ENCODE measurements at regions of chr2 and their contacts with region 1.

Region 1: GRCh38 chr2:17851731-17852585 is 26.5 kb upstream of the KCNS3 start:
- DNase-seq: peak; percentile 43
- ATAC-seq: peak; percentile 72
- H3K4me3 Mint-ChIP-seq: no peak overlapping the region
- H3K27ac Mint-ChIP-seq: no peak overlapping the region
- H3K4me1 Mint-ChIP-seq: no peaks in the 10 kb centered on the region
- H3K27me3 Mint-ChIP-seq: peaks cover 7% of the 10 kb centered on the region
- CTCF ChIP-seq: peak; percentile 79

Region 2: GRCh38 chr2:17873021-17873420 is 21.1 kb after region 1 on chr2:
- CTCF ChIA-PET with region 1: no interaction called
- POLR2A ChIA-PET with region 1: no interaction called
- intact Hi-C with region 1: no loop called
- DNase-seq: no peak
- ATAC-seq: no peak
- H3K4me3 Mint-ChIP-seq: no peak overlapping the region
- H3K27ac Mint-ChIP-seq: no peak overlapping the region
- H3K4me1 Mint-ChIP-seq: peaks cover 3% of the 10 kb centered on the region
- H3K27me3 Mint-ChIP-seq: peaks cover 38% of the 10 kb centered on the region
- CTCF ChIP-seq: no peak

Region 3: DNA sequence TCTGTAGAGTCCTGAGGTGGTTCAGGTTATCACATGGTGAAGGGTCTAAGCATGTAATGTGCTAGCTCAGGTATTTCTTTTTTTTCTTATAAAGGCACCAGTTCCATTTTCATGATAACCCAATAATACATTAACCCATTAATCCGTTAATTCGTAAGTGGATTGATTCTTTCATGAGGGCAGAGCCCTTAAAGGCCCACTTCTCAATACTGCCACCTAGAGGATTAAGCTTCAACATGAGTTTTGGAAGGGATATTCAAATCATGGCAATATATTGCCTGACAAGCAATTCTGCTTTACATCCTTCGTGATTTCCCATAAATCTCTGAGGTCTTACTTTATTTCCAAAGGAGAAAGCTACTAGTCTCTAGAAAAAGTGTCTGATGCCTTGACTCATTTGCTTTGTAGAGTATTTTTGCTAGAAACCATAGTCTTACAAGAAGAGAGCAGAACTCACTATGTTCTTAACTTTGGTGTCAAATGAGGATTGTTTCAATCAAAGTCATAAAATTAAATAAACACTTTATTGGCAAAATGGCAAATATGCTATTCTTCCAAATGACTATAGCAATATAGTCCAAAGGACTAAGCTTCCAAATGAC is 297.8 kb after region 1 on chr2:
- CTCF ChIA-PET with region 1: interaction called, 3 read pairs
- POLR2A ChIA-PET with region 1: no interaction called
- intact Hi-C with region 1: loop called (anchors 10 kb)
- DNase-seq: no peak
- ATAC-seq: no peak
- H3K4me3 Mint-ChIP-seq: no peak overlapping the region
- H3K27ac Mint-ChIP-seq: no peak overlapping the region
- H3K4me1 Mint-ChIP-seq: no peaks in the 10 kb centered on the region
- H3K27me3 Mint-ChIP-seq: peaks cover 6% of the 10 kb centered on the region
- CTCF ChIP-seq: peak; percentile 69

Region 4: DNA sequence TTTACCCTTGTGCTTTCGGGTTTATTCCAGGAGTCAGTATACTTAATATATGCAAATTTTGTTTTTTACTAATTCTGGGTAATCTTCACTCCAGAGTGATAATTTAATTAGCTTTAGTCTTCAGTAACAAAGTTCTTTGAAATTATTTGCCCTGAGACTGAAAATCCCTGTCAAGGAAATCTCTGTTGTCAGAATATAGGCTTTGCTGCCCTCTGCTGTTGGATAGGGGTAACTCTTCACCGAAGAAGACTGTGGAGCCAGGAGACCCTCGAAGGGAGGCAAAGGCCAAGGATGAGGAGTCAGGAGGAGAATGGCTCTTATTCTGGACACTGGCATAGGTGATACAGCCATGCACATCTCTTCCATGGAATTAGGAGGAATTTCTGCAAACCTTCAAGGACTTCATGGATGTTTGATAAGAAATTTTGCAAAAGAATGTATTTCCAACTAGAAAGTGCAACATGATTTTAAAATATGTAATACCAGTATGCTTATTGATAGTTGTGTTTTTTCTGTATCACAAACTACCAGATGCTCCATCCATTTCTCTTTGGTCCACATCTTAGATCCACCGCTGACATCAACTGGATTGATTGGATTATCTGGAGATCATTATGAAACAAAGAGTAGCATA is 526.2 kb after region 1 on chr2:
- CTCF ChIA-PET with region 1: no interaction called
- POLR2A ChIA-PET with region 1: no interaction called
- intact Hi-C with region 1: loop called (anchors 10 kb)
- DNase-seq: peak; percentile 38
- ATAC-seq: peak; percentile 47
- H3K4me3 Mint-ChIP-seq: no peak overlapping the region
- H3K27ac Mint-ChIP-seq: no peak overlapping the region
- H3K4me1 Mint-ChIP-seq: no peaks in the 10 kb centered on the region
- H3K27me3 Mint-ChIP-seq: peaks cover 12% of the 10 kb centered on the region
- CTCF ChIP-seq: peak; percentile 82